Prostate gland (tissue), 2 donors: ENCODE measurements at regions of chr11 and their contacts with region 1.

Region 1: DNA sequence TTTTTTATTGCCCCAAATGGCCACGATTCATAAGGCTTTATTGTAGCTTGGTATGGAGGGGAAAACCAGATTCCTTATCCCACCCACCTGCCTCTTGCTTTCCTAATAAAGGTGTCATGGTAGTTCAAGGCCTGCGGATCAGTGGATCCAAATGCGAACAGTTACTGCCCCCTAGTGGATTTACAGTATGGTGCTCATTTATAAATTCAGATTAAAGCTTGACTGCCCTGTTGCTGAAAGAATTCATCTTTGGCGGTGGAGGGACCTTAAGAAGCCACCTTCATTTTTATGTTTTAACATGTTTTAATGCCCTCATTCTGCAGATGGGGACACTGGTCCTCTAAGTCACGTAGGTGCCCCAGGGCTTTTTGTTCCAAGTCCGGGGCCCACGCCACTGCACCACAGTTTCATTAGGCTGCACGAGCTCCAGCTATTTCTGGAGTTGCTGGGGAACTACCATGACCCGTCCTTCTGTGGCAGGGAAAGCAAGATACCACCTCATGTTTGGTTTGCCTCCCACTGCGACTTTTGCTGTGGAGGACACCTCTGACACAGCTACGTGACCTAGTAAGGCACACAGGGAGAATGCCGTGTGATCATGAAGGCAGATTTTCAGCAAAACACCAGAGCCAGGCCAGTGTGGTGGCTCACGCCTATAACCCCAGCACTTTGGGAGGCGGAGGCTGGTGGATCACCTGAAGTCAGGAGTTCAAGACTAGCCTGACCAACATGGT is 15.6 kb upstream of the INCENP start:
- DNase-seq: peak; percentile 49
- H3K4me3 ChIP-seq: no peak overlapping the region
- H3K27ac ChIP-seq: no peak overlapping the region
- H3K4me1 ChIP-seq: no peaks in the 10 kb centered on the region
- H3K27me3 ChIP-seq: no peaks in the 10 kb centered on the region
- CTCF ChIP-seq: peak; percentile 77 to 86 (median 82)
- POLR2A ChIP-seq: no peak

Region 2: DNA sequence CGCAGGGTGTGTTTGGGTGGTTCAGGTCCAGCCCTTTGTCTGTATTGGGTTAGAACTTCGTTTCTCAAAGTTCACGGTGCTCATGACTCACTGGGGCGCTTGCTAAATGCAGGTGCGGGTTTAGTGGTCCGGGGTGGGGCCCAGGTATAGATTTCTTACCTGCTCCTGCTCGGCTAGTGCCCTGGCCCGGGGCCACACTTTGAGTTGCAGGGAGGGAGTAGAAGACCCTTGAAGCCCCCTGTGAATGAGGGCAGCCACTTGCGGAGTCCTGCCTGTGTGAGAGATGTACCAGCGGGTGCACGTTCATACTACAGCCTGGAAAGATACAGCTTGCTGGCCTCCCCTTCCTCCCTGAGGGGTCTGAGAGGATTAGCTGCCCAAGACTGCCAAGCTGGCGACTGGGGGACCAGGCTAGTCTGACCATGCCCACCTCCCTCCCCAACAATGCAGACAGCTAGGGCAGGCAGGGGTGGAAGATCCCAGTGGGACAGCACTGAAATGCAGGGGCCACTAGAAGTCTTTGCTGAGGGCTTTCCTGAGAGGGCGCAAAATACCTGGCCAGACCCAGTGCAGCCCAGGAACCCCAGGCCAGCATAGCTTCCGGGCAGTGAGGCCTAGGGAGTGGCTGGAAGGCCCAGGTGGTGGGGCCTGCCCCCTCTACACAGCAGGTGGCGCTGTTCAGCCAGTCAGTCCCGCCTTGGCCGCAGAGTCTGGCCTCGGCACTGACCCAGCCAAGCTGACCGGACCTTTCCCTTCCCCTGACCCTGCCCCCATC is 360.8 kb before region 1 on chr11:
- intact Hi-C with region 1: loop called (anchors 5 kb)
- DNase-seq: peak; percentile 64
- H3K4me3 ChIP-seq: no peak overlapping the region
- H3K27ac ChIP-seq: no peak overlapping the region
- H3K4me1 ChIP-seq: no peaks in the 10 kb centered on the region
- H3K27me3 ChIP-seq: no peaks in the 10 kb centered on the region
- CTCF ChIP-seq: peak; percentile 52 to 86 (median 74)
- POLR2A ChIP-seq: no peak

Region 3: GRCh38 chr11:61967116-61967923 is 140.9 kb before region 1 on chr11 and contains the start of gene FTH1:
- intact Hi-C with region 1: no loop called
- DNase-seq: peak; percentile 93
- H3K4me3 ChIP-seq: peak within 1 kb of the TSS; percentile 95 to 98
- H3K27ac ChIP-seq: peak within 1 kb of the TSS; percentile 100
- H3K4me1 ChIP-seq: peaks cover 13% of the 10 kb centered on the region
- H3K27me3 ChIP-seq: no peaks in the 10 kb centered on the region
- CTCF ChIP-seq: no peak
- POLR2A ChIP-seq: peak; percentile 97
- total RNA-seq, gene FTH1: 1,344 to 1,560 TPM

Region 4: DNA sequence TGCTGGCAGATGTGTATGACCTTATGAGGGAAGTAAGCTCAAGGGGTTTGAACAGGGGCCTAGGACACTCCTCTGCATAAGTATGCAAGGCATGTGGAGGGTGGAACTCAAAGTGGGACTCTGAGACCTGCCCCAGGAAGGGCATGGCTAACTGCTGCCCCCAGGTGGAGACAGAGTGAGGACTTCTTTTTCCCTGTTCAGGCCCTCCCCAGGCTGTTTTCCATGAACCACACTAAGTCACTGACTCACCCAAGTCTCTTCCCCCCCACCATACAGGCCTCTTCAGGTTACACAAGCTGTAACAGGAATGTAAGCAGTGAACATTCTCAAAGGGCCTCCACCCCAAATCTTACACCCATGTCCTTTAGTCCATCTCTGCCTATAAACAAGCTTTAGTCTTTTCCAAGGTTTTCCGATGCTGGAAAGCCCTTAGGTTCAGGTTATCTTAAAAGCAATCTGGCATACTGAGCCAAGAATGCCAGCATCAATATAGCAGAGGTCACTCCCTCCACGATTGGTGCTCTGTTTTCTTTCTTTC is 452.5 kb after region 1 on chr11:
- intact Hi-C with region 1: no loop called
- DNase-seq: peak; percentile 95
- H3K4me3 ChIP-seq: no peak overlapping the region
- H3K27ac ChIP-seq: peak overlapping the region; percentile 71 to 79
- H3K4me1 ChIP-seq: peaks cover 16% of the 10 kb centered on the region
- H3K27me3 ChIP-seq: no peaks in the 10 kb centered on the region
- CTCF ChIP-seq: peak; percentile 73 to 95 (median 91)
- POLR2A ChIP-seq: no peak